Activated naive CD4-positive, alpha-beta T cell treated with anti-CD3 and anti-CD28 coated beads for 36 hours (primary cell): ENCODE measurements at regions of chr11 and their contacts with region 1.

Region 1: GRCh38 chr11:112555491-112556364 is 295.1 kb upstream of the PLET1 start:
- DNase-seq: peak; percentile 81
- H3K4me3 Mint-ChIP-seq: no peak overlapping the region
- H3K27ac Mint-ChIP-seq: no peak overlapping the region
- H3K4me1 Mint-ChIP-seq: peaks cover 2% of the 10 kb centered on the region
- H3K27me3 Mint-ChIP-seq: no peaks in the 10 kb centered on the region

Region 2: GRCh38 chr11:112226062-112226830 is 329.5 kb before region 1 on chr11 and contains the start of gene PTS:
- CTCF ChIA-PET with region 1: no interaction called
- intact Hi-C with region 1: loop called (anchors 2 kb)
- DNase-seq: peak; percentile 86
- H3K4me3 Mint-ChIP-seq: peak within 1 kb of the TSS; percentile 88
- H3K27ac Mint-ChIP-seq: peak within 1 kb of the TSS; percentile 91
- H3K4me1 Mint-ChIP-seq: peaks cover 17% of the 10 kb centered on the region
- H3K27me3 Mint-ChIP-seq: no peaks in the 10 kb centered on the region
- total RNA-seq, gene PTS: 34.6 to 39.0 TPM

Region 3: DNA sequence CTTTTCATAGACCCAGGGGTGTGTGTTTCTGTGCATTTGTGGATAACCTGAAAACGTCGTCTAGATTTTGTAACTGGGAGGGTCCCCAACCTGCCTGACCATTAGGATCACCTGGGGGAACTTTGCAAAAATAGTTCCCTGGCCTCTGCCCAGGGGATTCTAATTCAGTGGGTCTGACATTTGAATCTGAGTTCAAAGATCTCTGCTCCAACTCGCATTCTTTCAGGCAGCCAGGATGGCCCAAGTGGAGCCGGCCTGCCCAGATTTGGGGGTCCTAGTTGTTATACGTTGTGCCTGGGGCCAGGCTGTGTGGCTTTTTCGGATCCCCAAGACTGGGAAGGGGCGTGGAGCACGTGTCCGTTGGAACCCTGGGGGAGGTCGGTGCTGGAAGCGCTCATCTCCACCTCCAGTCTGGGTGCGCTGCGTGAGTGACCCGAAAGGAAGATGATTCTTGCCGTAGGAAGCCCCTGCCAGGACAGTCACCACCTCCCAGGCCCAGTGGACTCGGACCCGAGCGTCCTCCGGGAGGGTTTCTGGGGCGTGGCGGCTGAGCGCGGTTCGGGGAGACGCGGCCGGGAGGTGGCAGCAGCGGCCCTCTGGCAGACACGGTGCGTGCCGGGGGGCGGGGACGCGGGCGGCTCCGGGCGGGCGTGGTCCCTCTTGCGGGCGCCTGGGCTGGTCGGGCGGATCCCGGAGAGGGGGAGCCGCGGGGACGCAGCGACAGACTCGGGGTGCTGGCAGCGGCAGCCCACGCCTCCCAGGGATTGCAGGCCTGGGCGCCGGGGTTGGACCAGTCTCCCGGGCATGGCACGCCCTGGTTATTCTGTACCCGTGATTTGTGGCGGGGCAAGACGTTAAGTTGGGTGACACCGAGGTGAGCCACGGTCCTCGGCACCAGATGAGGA is 265.9 kb before region 1 on chr11:
- CTCF ChIA-PET with region 1: interaction called, 37 read pairs
- intact Hi-C with region 1: loop called (anchors 1 kb)
- DNase-seq: peak; percentile 83
- H3K4me3 Mint-ChIP-seq: peak overlapping the region; percentile 67
- H3K27ac Mint-ChIP-seq: no peak overlapping the region
- H3K4me1 Mint-ChIP-seq: peaks cover 20% of the 10 kb centered on the region
- H3K27me3 Mint-ChIP-seq: no peaks in the 10 kb centered on the region

Region 4: GRCh38 chr11:112453601-112454577 is 101.8 kb before region 1 on chr11:
- CTCF ChIA-PET with region 1: interaction called, 9 read pairs
- intact Hi-C with region 1: loop called (anchors 5 kb)
- DNase-seq: peak; percentile 62
- H3K4me3 Mint-ChIP-seq: no peak overlapping the region
- H3K27ac Mint-ChIP-seq: no peak overlapping the region
- H3K4me1 Mint-ChIP-seq: peaks cover 5% of the 10 kb centered on the region
- H3K27me3 Mint-ChIP-seq: no peaks in the 10 kb centered on the region

Region 5: DNA sequence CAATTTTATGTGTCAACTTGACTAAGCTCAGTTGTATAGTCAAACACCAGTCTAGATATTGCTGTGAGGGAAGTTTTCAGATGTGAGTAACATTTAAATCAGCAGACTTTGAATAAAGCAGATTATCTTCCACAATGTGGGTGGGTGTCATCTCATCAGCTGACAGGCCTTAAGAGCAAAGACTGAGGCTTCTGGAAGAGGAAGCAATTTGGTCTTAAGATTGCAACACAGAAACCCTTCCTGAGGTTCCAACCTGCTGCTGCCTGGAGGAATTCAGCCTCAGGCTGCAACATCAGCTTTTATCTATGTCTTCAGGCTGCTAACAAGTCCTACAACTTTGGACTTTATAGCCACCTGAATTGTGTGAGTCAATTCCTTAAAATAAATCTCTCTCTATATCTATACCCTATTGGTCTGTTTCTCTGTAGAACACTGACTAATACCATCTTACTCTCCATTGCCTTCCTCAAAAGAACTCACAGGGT is 17.8 kb before region 1 on chr11:
- CTCF ChIA-PET with region 1: interaction called, 15 read pairs
- intact Hi-C with region 1: no loop called
- DNase-seq: no peak
- H3K4me3 Mint-ChIP-seq: no peak overlapping the region
- H3K27ac Mint-ChIP-seq: no peak overlapping the region
- H3K4me1 Mint-ChIP-seq: peaks cover 38% of the 10 kb centered on the region
- H3K27me3 Mint-ChIP-seq: peaks cover 11% of the 10 kb centered on the region

Region 6: DNA sequence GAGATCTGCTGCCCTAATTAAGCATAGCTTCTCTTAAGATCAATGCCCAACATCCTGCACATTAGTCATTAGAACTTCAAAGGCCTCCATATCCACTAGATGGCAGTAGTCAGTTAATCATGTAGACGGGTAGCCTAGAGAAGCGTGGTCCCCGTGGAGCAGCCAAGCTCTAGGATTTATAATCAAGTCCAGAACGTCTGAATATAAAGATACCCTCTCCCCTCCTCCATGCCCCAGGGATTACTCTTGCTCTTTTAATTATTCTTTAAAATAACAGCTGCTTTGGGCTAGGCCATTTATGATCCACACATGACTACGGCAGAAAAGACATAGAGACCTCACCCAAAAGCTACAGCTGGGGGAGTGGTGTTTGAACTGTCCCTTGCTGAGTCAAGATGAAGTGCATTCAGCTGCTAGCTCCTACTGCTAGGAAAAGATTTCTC is 32.5 kb after region 1 on chr11:
- CTCF ChIA-PET with region 1: interaction called, 18 read pairs
- intact Hi-C with region 1: no loop called
- DNase-seq: peak; percentile 58
- H3K4me3 Mint-ChIP-seq: no peak overlapping the region
- H3K27ac Mint-ChIP-seq: no peak overlapping the region
- H3K4me1 Mint-ChIP-seq: no peaks in the 10 kb centered on the region
- H3K27me3 Mint-ChIP-seq: no peaks in the 10 kb centered on the region

Region 7: DNA sequence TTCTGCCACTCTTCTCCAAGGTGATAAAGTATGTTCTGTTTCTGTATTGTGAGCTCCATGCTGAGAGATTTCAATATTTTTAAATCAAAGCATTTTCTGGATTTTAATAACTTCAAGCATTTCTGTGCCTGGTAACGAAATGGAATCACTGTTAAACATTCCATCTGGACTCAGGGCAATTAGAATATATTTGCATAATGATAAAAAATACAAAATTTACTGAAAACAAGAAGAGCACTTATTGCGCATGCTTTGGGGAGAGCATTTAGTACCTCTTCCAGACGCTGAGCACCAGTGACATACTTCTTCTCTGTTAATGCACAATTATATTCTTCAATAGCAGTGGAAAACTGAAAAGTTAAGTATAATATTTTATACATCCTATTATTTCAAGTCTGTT is 1204.5 kb after region 1 on chr11:
- CTCF ChIA-PET with region 1: no interaction called
- intact Hi-C with region 1: no loop called
- DNase-seq: no peak
- H3K4me3 Mint-ChIP-seq: no peak overlapping the region
- H3K27ac Mint-ChIP-seq: no peak overlapping the region
- H3K4me1 Mint-ChIP-seq: no peaks in the 10 kb centered on the region
- H3K27me3 Mint-ChIP-seq: no peaks in the 10 kb centered on the region